CD4-positive, alpha-beta T cell (primary cell): ENCODE measurements at regions of chr1 and their contacts with region 1.

Region 1: DNA sequence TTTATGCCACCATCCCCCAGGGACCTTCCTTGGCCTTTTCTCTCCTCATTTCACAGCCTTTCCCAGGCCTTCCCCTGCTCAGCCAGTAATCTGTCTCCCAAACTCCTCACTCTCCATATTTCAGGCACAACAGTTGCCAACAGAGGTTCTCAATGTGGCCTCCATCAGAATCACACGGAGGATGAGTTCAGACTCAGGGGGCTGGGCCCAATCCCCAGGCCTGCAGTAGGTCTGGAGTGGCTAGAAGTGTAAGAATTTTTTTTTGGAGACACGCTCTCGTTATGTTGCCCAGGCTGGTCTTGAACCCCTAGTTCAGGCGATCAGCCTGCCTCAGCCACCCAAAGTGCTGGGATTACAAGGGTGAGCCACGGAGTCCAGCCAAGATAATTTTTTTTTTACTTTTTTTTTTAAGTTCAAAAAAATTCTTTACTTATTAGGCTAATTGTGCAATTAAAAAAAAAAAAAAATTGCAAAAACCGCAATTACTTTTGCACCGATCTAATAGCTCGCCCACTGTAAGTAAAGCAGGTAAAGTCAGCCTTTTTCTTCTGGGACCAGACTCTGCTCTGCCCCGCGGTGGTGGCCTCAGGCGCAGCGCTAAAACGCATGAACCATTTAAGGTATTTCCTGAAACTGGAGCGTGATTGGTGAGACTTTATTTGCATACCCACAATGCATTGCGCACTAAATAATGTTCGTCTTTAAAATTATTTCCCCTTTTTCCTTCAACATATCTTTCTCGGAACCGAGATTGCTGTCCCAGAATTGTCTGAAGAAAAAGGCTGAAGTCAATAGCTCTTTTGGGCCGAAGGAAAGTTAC is 18.7 kb downstream of the KIAA2013 start:
- DNase-seq: peak; percentile 80 to 97 (median 88)
- ATAC-seq: peak; percentile 67
- H3K4me3 ChIP-seq: peak overlapping the region; percentile 90
- H3K4me3 Mint-ChIP-seq: peak overlapping the region; percentile 91
- H3K27ac ChIP-seq: peak overlapping the region; percentile 86 to 97
- H3K27ac Mint-ChIP-seq: peak overlapping the region; percentile 100
- H3K4me1 ChIP-seq: peaks cover 36% of the 10 kb centered on the region
- H3K4me1 Mint-ChIP-seq: peaks cover 41% of the 10 kb centered on the region
- H3K27me3 ChIP-seq: peaks cover 6% of the 10 kb centered on the region in 2 experiments
- H3K27me3 Mint-ChIP-seq: peaks cover 20% of the 10 kb centered on the region
- CTCF ChIP-seq: peak; percentile 81

Region 2: DNA sequence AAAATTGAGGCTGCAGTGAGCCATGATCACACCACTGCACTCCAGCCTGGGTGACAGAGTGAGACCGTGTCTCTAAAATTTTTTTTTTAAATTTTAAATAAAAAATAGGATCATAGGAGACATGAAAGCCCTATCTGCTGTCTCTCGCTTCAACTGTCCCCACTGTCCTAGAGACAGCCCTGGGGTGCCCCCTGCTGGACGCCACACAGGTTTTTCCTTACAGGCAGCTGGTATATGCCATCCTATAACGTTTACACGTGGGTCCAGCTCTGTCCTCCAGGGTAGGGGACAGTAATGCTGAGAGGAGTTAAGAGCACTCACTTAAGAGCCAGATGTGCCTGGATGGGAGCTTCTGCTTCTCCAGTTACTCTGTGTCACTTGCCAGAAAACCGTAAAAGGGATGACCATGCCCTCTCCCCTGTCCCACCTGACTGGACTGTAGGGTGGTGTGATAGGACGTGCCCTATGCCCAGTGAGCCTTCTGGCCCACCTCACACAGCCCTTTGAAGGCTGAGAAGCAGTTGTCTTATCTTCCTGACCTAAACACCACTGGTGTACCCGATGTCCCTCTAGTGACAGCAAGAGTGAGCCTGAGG is 261.7 kb before region 1 on chr1:
- CTCF ChIA-PET with region 1: no interaction called
- POLR2A ChIA-PET with region 1: interaction called, 4 read pairs
- intact Hi-C with region 1: loop called in 1 of 2 experiments (anchors 5 kb)
- DNase-seq: peak; percentile 71 to 90 (median 78)
- ATAC-seq: peak; percentile 59
- H3K4me3 ChIP-seq: no peak overlapping the region
- H3K4me3 Mint-ChIP-seq: no peak overlapping the region
- H3K27ac ChIP-seq: no peak overlapping the region
- H3K27ac Mint-ChIP-seq: no peak overlapping the region
- H3K4me1 ChIP-seq: peaks cover 26% of the 10 kb centered on the region
- H3K4me1 Mint-ChIP-seq: peaks cover 19% of the 10 kb centered on the region
- H3K27me3 ChIP-seq: no peaks in the 10 kb centered on the region
- H3K27me3 Mint-ChIP-seq: peaks cover 5% of the 10 kb centered on the region
- CTCF ChIP-seq: peak; percentile 75

Region 3: GRCh38 chr1:11735854-11736745 is 171.4 kb before region 1 on chr1 and contains the start of gene AGTRAP:
- CTCF ChIA-PET with region 1: no interaction called
- POLR2A ChIA-PET with region 1: interaction called, 22 read pairs
- intact Hi-C with region 1: no loop called
- DNase-seq: peak; percentile 72 to 95 (median 81)
- ATAC-seq: peak; percentile 65
- H3K4me3 ChIP-seq: peak within 1 kb of the TSS; percentile 99
- H3K4me3 Mint-ChIP-seq: peak within 1 kb of the TSS; percentile 96
- H3K27ac ChIP-seq: peak within 1 kb of the TSS; percentile 75
- H3K27ac Mint-ChIP-seq: peak within 1 kb of the TSS; percentile 43
- H3K4me1 ChIP-seq: peaks cover 74% of the 10 kb centered on the region
- H3K4me1 Mint-ChIP-seq: peaks cover 73% of the 10 kb centered on the region
- H3K27me3 ChIP-seq: no peaks in the 10 kb centered on the region
- H3K27me3 Mint-ChIP-seq: no peaks in the 10 kb centered on the region
- CTCF ChIP-seq: no peak
- total RNA-seq, gene AGTRAP: 21.3 to 21.8 TPM

Region 4: DNA sequence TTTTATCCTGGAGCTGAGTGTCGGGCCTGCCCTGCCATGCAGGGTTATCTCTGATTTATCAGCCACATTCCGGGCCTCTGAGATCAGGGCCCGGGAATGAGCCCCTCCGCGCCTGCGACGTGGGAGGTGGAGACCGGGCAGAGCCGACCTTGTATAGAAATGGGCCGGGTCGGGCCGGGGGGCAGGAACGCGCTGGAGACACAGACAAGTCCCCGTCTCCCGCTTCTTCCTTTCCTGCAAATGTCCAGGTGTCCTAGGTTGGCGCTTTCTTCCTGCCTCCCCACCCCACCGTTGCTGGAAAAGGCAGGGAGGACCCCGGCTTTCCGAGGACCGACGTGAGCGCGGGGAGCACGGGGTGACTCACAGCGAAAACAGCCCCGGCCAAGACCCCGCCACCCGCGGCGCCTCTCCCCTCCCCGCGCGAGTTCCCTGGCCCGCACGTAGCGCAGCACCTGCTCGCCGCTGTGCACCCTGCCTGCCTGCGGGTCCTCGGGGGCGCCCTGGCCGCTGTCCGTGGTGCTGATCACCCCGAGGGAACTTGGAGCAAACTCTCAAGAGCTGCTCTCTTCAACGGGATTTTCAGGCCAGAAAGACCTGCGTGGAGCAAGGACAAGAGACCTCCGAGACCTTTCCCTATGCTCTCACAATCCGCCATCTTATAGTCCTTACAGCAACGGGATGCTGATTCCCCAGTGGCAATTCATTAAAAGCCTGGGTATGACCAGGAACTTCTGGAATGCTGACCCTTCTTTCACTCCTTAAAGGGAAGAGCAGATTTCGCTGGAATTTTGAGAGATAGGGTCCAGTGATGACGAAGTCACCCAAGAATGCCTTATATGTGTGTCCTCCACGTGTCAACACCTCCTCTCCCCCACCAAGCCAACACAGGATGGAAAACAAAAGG is 48.3 kb before region 1 on chr1:
- CTCF ChIA-PET with region 1: no interaction called
- POLR2A ChIA-PET with region 1: no interaction called
- intact Hi-C with region 1: loop called in 1 of 2 experiments (anchors 5 kb)
- DNase-seq: peak; percentile 41 to 80 (median 62)
- ATAC-seq: peak; percentile 94
- H3K4me3 ChIP-seq: no peak overlapping the region
- H3K4me3 Mint-ChIP-seq: no peak overlapping the region
- H3K27ac ChIP-seq: no peak overlapping the region
- H3K27ac Mint-ChIP-seq: no peak overlapping the region
- H3K4me1 ChIP-seq: peaks cover 4% of the 10 kb centered on the region
- H3K4me1 Mint-ChIP-seq: no peaks in the 10 kb centered on the region
- H3K27me3 ChIP-seq: peaks cover 56 to 75% of the 10 kb centered on the region in 2 experiments
- H3K27me3 Mint-ChIP-seq: peaks cover 75% of the 10 kb centered on the region
- CTCF ChIP-seq: no peak

Region 5: DNA sequence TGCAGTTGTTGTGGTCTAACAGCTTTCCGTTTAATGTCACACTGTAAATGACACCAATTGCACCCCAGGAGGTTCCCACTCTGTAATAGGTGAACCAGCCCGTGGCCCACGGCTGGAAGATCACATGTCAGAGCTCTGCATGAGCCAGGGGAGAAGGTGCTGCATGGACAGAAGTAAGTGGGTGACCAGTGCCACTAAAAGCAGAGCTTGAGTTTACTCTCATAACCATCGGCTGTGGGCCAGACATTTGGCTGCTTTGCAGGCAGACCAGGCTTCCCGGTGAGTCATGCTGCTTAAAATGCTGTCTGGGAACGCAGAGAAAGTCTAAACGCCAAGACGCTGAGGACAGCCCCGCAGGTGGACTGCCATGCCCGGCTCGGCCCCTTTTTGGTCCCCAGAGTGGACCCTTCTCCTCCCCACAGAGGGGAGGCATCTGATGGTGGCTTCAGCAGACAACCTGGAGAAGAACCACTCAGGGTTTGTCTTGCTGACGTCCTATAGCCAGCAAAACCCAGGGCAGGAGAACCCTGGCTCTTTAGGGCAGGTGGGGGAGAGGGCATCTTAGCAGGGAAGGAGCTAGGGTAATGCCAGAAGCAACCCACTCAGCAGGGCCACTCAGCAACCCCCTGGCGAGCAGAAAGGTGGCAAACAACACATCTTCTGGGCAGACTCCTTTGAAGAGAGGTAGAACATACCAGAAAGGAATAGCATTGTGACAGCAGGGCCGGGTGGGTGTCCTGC is 11.5 kb after region 1 on chr1:
- CTCF ChIA-PET with region 1: no interaction called
- POLR2A ChIA-PET with region 1: interaction called, 23 read pairs
- intact Hi-C with region 1: loop called in 1 of 2 experiments (anchors 2 kb)
- DNase-seq: no peak
- ATAC-seq: no peak
- H3K4me3 ChIP-seq: no peak overlapping the region
- H3K4me3 Mint-ChIP-seq: no peak overlapping the region
- H3K27ac ChIP-seq: no peak overlapping the region
- H3K27ac Mint-ChIP-seq: no peak overlapping the region
- H3K4me1 ChIP-seq: peaks cover 30% of the 10 kb centered on the region
- H3K4me1 Mint-ChIP-seq: peaks cover 21% of the 10 kb centered on the region
- H3K27me3 ChIP-seq: no peaks in the 10 kb centered on the region
- H3K27me3 Mint-ChIP-seq: no peaks in the 10 kb centered on the region
- CTCF ChIP-seq: no peak

Region 6: GRCh38 chr1:11979851-11980675 is 72.6 kb after region 1 on chr1 and contains the start of gene MFN2:
- CTCF ChIA-PET with region 1: interaction called, 5 read pairs
- POLR2A ChIA-PET with region 1: interaction called, 133 read pairs
- intact Hi-C with region 1: loop called (anchors 2 to 5 kb)
- DNase-seq: peak; percentile 81 to 96 (median 88)
- ATAC-seq: peak; percentile 92
- H3K4me3 ChIP-seq: peak within 1 kb of the TSS; percentile 90
- H3K4me3 Mint-ChIP-seq: peak within 1 kb of the TSS; percentile 96
- H3K27ac ChIP-seq: peak within 1 kb of the TSS; percentile 90 to 97
- H3K27ac Mint-ChIP-seq: peak within 1 kb of the TSS; percentile 93
- H3K4me1 ChIP-seq: peaks cover 25% of the 10 kb centered on the region
- H3K4me1 Mint-ChIP-seq: peaks cover 45% of the 10 kb centered on the region
- H3K27me3 ChIP-seq: no peaks in the 10 kb centered on the region
- H3K27me3 Mint-ChIP-seq: no peaks in the 10 kb centered on the region
- CTCF ChIP-seq: no peak
- total RNA-seq, gene MFN2: 33.0 to 38.1 TPM

Region 7: DNA sequence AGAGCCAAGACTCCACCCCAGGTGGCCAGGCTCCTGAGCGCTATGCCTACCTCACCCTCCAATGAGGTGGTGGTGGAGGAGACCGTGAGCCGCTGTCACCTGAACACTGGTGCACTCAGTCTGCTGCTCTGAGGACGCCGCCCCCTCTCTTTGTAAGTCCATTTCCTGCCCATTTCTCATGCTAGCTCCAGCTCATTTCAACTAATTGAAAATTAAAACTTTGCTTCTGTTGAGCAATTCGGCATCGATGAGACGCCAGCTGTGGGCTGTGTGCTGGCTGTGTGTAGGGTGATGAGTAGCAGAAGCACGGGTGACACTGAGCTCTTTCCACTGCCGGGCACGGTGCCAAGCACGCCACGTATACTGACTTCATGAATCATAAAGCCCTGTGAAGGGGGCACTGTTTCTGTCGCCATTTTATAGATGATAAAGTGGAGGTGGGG is 270.5 kb after region 1 on chr1:
- CTCF ChIA-PET with region 1: no interaction called
- POLR2A ChIA-PET with region 1: interaction called, 4 read pairs
- intact Hi-C with region 1: loop called in 1 of 2 experiments (anchors 10 kb)
- DNase-seq: peak; percentile 77 to 99 (median 94)
- ATAC-seq: peak; percentile 70
- H3K4me3 ChIP-seq: peak overlapping the region; percentile 41
- H3K4me3 Mint-ChIP-seq: peak overlapping the region; percentile 69
- H3K27ac ChIP-seq: peak overlapping the region; percentile 83 to 85
- H3K27ac Mint-ChIP-seq: peak overlapping the region; percentile 96
- H3K4me1 ChIP-seq: peaks cover 100% of the 10 kb centered on the region
- H3K4me1 Mint-ChIP-seq: peaks cover 77% of the 10 kb centered on the region
- H3K27me3 ChIP-seq: no peaks in the 10 kb centered on the region
- H3K27me3 Mint-ChIP-seq: no peaks in the 10 kb centered on the region
- CTCF ChIP-seq: no peak

Region 8: DNA sequence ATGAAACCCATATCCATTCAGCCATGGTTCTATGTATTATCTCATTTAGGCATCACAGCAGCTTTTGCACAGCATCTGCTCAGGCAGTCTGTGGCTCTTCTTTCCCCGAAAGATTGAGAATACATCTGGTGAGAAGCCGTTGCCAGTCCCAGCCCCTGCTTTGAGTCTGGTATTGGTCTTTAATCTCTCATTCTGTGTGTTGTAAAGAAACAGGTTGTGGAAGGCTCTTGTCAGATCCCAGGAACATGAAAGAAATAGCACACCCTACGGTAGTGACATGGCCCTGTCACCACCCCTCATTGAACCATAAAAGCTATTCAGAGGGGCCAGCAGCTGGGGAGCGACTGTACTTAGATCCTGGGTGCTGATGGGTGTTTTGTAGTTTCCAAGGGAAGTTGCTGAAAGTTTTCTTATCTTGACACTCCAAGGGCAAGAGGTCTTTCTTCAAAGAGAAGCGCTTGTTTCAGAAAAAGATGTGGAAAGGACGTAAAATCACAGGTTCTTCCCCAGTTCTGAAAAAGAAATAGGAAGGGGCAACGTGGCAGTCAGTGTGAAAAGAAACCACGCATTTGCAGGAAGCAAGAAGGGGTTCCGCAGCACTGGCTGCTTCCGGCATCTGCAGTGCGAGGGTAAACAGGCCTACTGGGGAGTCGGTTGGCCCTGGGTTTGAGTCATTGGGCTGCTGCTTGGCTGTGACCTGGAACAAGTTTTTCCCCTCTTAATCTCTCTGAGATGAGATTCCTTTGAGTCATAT is 565.5 kb after region 1 on chr1:
- CTCF ChIA-PET with region 1: no interaction called
- POLR2A ChIA-PET with region 1: no interaction called
- intact Hi-C with region 1: no loop called
- DNase-seq: peak; percentile 25 to 84 (median 63)
- ATAC-seq: peak; percentile 75
- H3K4me3 ChIP-seq: peak overlapping the region; percentile 24
- H3K4me3 Mint-ChIP-seq: peak overlapping the region; percentile 55
- H3K27ac ChIP-seq: peak overlapping the region; percentile 59 to 81
- H3K27ac Mint-ChIP-seq: peak overlapping the region; percentile 88
- H3K4me1 ChIP-seq: peaks cover 47% of the 10 kb centered on the region
- H3K4me1 Mint-ChIP-seq: peaks cover 87% of the 10 kb centered on the region
- H3K27me3 ChIP-seq: no peaks in the 10 kb centered on the region
- H3K27me3 Mint-ChIP-seq: no peaks in the 10 kb centered on the region
- CTCF ChIP-seq: no peak

Region 9: GRCh38 chr1:12565966-12566352 is 658.5 kb after region 1 on chr1:
- CTCF ChIA-PET with region 1: no interaction called
- POLR2A ChIA-PET with region 1: no interaction called
- intact Hi-C with region 1: no loop called
- DNase-seq: peak in 1 of 14 experiments; percentile 4
- ATAC-seq: no peak
- H3K4me3 ChIP-seq: no peak overlapping the region
- H3K4me3 Mint-ChIP-seq: no peak overlapping the region
- H3K27ac ChIP-seq: no peak overlapping the region
- H3K27ac Mint-ChIP-seq: no peak overlapping the region
- H3K4me1 ChIP-seq: no peaks in the 10 kb centered on the region
- H3K4me1 Mint-ChIP-seq: peaks cover 5% of the 10 kb centered on the region
- H3K27me3 ChIP-seq: no peaks in the 10 kb centered on the region
- H3K27me3 Mint-ChIP-seq: no peaks in the 10 kb centered on the region
- CTCF ChIP-seq: no peak